ENCODE measurements at regions of chr20 and their contacts with region 1.

Region 1: DNA sequence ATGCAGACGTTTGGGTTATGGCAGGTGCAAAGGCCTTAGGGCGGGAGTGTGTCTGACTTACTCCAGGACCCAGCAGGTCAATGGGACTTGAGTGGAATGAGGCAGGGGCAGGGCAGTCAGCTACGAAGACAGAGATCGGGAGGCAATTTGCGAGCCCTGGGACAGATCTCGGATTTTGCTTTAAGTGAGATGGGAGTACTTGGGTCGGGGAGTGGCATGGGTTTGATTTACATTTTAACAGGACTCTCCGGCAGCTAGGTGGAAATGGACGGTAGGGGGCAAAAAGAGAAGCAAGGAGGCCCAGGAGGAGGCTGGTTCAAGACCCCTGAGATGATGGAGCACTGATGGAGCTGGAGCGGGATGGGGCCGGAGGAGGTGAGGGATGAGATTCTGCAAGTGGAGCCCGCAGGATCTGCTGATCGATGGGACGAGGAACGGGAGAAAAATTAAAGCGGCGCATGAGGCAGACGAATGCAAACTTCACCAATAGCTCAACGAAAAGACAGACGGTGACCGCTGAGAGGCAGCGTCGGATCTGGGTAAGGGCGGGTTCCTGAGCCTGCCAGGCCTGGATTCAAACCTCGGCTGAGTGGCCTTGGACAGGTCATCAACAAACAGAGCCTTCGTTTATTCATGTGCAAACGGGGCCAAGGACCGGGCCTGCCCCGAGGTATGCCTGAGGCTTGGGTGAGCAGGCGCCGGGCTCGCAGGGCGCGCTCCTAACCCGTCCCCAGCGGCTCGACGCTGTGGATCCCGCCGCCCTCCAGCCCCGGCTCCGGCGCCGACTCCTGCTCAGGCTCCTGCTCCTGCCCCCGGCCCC is 756 bp upstream of the RBCK1 start:
- DNase-seq: peak; percentile 87
- ATAC-seq: peak; percentile 74
- H3K4me3 Mint-ChIP-seq: peak overlapping the region; percentile 78
- H3K27ac Mint-ChIP-seq: peak overlapping the region; percentile 87
- H3K4me1 Mint-ChIP-seq: peaks cover 43% of the 10 kb centered on the region
- H3K27me3 Mint-ChIP-seq: no peaks in the 10 kb centered on the region

Region 2: GRCh38 chr20:297098-297924 is 110.0 kb before region 1 on chr20 and contains the start of gene ZCCHC3:
- CTCF ChIA-PET with region 1: no interaction called
- POLR2A ChIA-PET with region 1: no interaction called
- intact Hi-C with region 1: loop called in 1 of 2 experiments (anchors 1 kb)
- DNase-seq: peak; percentile 92
- ATAC-seq: peak; percentile 81
- H3K4me3 Mint-ChIP-seq: peak within 1 kb of the TSS; percentile 100
- H3K27ac Mint-ChIP-seq: peak within 1 kb of the TSS; percentile 99
- H3K4me1 Mint-ChIP-seq: peaks cover 44% of the 10 kb centered on the region
- H3K27me3 Mint-ChIP-seq: no peaks in the 10 kb centered on the region
- total RNA-seq, gene ZCCHC3: 15.6 to 16.4 TPM

Region 3: GRCh38 chr20:354298-355064 is 52.9 kb before region 1 on chr20:
- CTCF ChIA-PET with region 1: interaction called, 5 read pairs
- POLR2A ChIA-PET with region 1: no interaction called
- intact Hi-C with region 1: loop called in 1 of 2 experiments (anchors 2 kb)
- DNase-seq: peak; percentile 86
- ATAC-seq: peak; percentile 99
- H3K4me3 Mint-ChIP-seq: no peak overlapping the region
- H3K27ac Mint-ChIP-seq: no peak overlapping the region
- H3K4me1 Mint-ChIP-seq: peaks cover 3% of the 10 kb centered on the region
- H3K27me3 Mint-ChIP-seq: no peaks in the 10 kb centered on the region

Region 4: DNA sequence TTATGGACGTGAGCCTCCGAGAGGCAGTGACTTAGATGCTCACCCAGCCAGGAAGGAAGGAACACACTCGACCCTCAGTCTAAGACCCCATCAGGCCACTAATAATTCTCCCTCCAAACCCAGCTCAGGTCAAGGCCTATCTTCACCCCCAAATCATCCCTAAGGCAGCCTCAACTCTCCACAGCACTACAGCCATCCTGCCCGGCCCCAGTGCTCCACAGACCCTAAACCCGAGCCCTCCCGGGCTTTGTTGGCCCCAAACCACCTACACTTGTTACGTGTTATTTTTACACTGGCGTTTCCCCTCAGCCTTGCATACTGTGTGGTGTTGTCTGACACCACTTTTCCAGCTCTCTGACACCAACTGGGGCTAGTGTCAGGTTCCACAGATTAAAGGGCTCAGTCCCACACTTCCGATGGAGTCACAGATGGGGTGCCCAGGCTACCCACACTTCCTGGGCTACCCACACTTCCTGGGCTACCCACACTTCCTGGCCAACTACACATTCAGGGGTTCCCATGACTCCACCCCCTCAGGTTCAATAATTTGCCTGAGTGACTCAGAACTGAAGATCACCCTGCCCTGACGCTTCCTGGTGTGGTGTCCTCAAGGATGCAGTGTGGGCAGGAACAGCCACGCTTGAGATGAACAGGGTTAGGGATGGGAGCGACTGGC is 26.1 kb after region 1 on chr20:
- CTCF ChIA-PET with region 1: no interaction called
- POLR2A ChIA-PET with region 1: interaction called, 3 read pairs
- intact Hi-C with region 1: loop called (anchors 1 kb)
- DNase-seq: peak; percentile 86
- ATAC-seq: peak; percentile 86
- H3K4me3 Mint-ChIP-seq: peak overlapping the region; percentile 51
- H3K27ac Mint-ChIP-seq: peak overlapping the region; percentile 94
- H3K4me1 Mint-ChIP-seq: peaks cover 67% of the 10 kb centered on the region
- H3K27me3 Mint-ChIP-seq: no peaks in the 10 kb centered on the region

Region 5: DNA sequence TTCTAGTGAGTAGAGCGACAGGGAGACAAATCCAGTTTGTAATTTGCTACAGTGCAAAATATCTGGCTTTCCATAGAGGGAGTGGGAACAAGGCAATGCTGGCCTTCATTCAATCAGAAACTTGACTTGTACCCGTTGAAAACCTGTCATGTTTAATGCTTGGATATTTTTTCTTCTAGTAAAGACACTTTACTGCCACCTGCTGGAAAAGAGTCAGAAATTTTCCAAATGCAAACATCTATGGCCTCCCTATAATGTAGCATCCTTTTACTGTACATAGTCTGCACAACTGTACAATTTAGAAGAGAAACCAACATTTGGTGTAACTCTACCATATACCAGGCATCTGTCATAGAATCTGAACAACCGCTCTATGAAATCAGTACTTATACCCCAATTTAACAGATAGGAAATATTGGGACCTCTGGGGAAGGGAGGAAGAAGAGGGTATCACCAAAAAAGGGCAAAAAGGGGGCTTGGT is 71.6 kb after region 1 on chr20:
- CTCF ChIA-PET with region 1: no interaction called
- POLR2A ChIA-PET with region 1: no interaction called
- intact Hi-C with region 1: loop called (anchors 1 to 5 kb)
- DNase-seq: peak; percentile 19
- ATAC-seq: peak; percentile 82
- H3K4me3 Mint-ChIP-seq: no peak overlapping the region
- H3K27ac Mint-ChIP-seq: peak overlapping the region; percentile 30
- H3K4me1 Mint-ChIP-seq: peaks cover 28% of the 10 kb centered on the region
- H3K27me3 Mint-ChIP-seq: no peaks in the 10 kb centered on the region

Region 6: DNA sequence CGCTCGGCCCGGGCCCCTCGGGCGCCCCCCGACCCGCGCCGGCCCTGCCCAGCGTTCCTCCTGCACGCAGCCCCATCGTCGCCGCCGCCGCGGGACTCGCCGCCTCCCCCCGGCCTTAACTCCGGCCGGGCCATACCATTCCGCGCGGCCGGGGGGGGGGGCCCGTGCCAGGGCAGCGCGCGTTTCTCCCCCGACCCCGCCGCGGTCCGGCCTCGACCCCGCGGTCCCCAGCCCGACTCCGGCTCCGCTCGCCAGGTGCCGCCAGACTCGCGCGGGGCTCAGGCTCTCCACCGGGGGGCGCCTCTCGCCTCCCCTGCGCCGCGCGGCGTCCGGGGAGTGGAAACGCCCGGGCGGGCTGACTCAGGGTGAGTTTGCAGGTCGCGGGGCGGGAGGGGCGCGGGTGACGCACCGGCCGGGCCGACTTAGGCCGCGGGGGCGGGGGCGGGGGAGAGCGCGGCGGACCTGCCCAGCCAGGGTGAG is 245.8 kb after region 1 on chr20 and contains the start of gene SRXN1:
- CTCF ChIA-PET with region 1: no interaction called
- POLR2A ChIA-PET with region 1: no interaction called
- intact Hi-C with region 1: loop called in 1 of 2 experiments (anchors 1 kb)
- DNase-seq: peak; percentile 91
- ATAC-seq: peak; percentile 93
- H3K4me3 Mint-ChIP-seq: peak within 1 kb of the TSS; percentile 76
- H3K27ac Mint-ChIP-seq: peak within 1 kb of the TSS; percentile 80
- H3K4me1 Mint-ChIP-seq: peaks cover 24% of the 10 kb centered on the region
- H3K27me3 Mint-ChIP-seq: peaks cover 8% of the 10 kb centered on the region
- total RNA-seq, gene SRXN1: 12.6 to 13.5 TPM

Measured in activated CD4-positive, alpha-beta T cell treated with anti-CD3 and anti-CD28 coated beads for 36 hours (primary cell).